ENCODE measurements at regions of chr1 and their contacts with region 1.

Region 1: DNA sequence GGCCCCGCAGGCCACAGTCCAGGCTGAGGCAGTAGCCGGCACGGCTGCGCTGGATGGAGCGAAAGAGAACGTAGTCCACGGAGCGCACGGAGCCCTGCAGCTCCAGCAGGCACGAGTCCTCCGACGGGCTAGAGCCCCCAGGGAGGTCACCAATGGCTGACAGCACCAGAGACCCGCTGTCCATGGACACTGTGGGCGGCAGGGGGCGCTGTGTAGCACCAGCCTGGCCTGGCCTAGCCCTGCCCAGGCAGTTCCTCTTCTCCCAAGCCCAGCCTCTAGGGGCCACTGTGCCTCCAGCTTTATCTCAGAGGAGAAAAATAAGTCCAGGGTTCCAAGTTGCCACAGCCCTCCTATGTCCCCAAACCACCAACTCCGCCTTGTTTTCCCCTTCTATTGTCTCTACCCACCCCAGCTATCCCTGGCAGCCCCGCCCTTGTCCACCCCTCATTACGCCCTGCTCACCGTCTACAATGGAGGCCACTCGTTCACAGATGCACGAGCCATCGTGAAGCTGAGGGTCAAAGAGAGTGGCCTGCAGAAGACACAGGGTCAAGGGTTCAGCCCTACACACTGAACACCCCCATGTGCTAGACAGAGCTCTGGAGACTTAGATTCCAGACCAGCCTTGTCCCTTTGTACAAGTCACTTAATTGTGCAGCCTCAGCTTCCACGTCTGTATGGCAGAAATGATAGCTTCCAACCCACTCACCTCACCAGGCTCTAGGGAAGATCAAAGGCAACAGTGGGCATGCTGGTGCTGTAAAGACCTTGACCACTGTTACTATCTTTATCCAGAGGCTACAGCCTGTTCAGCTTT is 4.4 kb downstream of the ENTREP3 start:
- DNase-seq: peak; percentile 98
- ATAC-seq: peak; percentile 97
- H3K4me3 Mint-ChIP-seq: peak overlapping the region; percentile 65
- H3K27ac Mint-ChIP-seq: peak overlapping the region; percentile 70
- H3K4me1 Mint-ChIP-seq: peaks cover 35% of the 10 kb centered on the region
- H3K27me3 Mint-ChIP-seq: no peaks in the 10 kb centered on the region

Region 2: GRCh38 chr1:155117617-155118016 is 133.2 kb before region 1 on chr1:
- CTCF ChIA-PET with region 1: no interaction called
- DNase-seq: no peak
- ATAC-seq: no peak
- H3K4me3 Mint-ChIP-seq: no peak overlapping the region
- H3K27ac Mint-ChIP-seq: no peak overlapping the region
- H3K4me1 Mint-ChIP-seq: no peaks in the 10 kb centered on the region
- H3K27me3 Mint-ChIP-seq: peaks cover 27% of the 10 kb centered on the region

Region 3: DNA sequence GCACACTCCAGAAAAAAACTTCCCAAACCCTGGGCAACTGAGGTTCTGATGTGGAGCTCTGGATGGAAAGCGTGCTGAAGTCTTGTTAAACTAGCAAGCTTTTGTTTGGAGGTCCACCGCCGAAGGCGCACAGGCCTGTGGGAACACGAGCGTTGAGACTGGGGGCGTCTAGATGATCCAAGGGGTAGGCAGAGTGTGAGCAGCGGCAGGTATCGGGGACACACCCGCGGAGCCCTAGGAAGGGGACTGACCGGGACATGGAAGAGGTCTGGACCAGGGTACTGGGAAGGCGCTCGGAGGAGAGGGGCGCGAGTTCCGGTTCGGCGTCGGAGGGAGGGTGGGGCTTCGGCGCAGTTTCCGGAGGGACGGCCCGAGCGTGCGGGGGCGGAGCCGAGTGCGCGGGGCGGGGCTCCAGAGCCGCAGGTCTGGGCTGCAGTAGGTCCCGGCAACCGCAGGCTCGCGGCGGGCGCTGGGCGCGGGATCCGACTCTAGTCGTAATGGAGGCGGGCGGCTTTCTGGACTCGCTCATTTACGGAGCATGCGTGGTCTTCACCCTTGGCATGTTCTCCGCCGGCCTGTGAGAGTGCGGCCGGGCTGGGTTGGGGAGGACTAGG is 115.3 kb before region 1 on chr1 and contains the start of gene SLC50A1:
- CTCF ChIA-PET with region 1: no interaction called
- DNase-seq: peak; percentile 95
- ATAC-seq: peak; percentile 84
- H3K4me3 Mint-ChIP-seq: peak within 1 kb of the TSS; percentile 97
- H3K27ac Mint-ChIP-seq: peak within 1 kb of the TSS; percentile 98
- H3K4me1 Mint-ChIP-seq: peaks cover 37% of the 10 kb centered on the region
- H3K27me3 Mint-ChIP-seq: peaks cover 2% of the 10 kb centered on the region
- total RNA-seq, gene SLC50A1: 39.8 to 41.2 TPM

Region 4: DNA sequence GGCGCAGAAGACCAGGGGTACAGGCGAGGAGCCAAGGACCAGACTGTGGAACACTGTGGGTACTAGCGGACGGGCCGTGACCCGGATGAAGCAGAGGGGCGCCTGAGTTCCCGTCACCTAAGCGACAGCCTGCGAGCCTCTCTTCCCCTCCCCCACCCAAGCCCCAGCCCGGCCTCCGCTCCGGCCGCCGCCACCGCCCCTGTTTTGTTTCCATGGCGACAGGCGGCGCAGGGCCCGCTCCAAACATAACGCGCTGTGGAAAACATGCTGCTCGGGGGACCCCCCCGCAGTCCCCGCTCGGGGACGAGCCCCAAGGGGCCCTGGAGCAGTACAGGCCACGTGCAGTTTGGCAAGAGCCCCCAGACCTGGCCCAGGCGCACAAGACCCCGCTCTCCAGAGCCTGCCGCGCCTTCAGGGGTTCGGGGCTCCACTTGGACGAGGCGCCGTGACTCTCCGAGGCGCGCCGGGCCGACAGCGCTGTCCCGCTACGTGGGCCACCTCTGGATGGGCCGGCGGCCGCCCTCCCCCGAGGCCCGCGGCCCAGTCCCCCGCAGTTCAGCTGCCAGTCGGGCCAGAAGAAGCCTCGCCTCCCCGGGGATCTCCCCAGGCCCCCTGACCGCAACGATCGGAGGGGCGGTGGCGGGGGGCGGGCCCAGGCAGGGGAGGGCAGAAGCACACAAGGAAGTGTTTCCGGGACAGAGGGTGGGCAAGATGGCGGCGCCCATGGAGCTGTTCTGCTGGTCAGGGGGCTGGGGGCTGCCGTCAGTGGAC is 42.1 kb before region 1 on chr1 and contains the start of gene MTX1:
- CTCF ChIA-PET with region 1: interaction called, 36 read pairs
- DNase-seq: peak; percentile 92
- ATAC-seq: peak; percentile 78
- H3K4me3 Mint-ChIP-seq: peak within 1 kb of the TSS; percentile 83
- H3K27ac Mint-ChIP-seq: peak within 1 kb of the TSS; percentile 88
- H3K4me1 Mint-ChIP-seq: peaks cover 34% of the 10 kb centered on the region
- H3K27me3 Mint-ChIP-seq: no peaks in the 10 kb centered on the region
- total RNA-seq, gene MTX1: 39.0 to 48.6 TPM

Region 5: DNA sequence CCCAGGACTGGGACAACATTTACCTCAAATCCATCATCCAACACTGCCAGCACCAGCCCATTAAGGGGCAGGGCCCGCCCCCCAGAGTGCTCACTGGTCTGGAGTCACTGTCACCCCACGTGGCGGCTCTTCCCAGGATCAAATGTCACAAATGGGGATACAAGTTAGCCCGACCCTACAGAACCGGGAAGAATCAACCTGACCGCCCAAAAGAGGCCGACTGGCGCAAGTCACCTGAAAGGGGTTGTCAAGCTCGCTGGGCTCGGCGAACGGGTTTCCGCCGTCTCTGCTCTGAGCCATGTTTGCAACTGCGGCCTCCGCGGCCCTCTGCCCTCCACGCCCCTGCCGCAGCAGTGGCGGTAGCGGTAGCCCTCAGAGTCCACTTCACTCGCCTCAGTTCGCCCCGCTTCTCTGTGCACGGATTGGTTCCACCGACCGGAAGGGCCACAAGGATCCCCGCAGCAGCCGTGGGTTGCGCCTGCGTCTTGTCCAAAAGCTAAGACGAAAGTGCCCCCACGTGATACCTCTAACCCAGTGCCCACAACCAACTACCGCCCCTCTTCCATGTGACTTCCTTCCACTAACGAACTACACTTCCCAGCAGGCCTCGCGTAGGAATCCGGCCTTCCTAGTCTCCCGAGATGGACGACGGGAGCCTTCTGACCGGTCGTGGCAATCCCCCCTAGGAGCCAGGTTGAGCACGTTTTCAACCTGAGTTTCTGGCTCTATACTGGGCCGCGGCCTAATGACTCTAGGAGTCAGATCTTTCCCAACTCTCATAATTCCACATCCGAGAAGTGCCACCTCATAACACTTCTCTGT is 11.2 kb after region 1 on chr1 and contains the start of gene SCAMP3:
- CTCF ChIA-PET with region 1: interaction called, 97 read pairs
- DNase-seq: peak; percentile 95
- ATAC-seq: peak; percentile 97
- H3K4me3 Mint-ChIP-seq: peak within 1 kb of the TSS; percentile 95
- H3K27ac Mint-ChIP-seq: peak within 1 kb of the TSS; percentile 86
- H3K4me1 Mint-ChIP-seq: peaks cover 39% of the 10 kb centered on the region
- H3K27me3 Mint-ChIP-seq: no peaks in the 10 kb centered on the region
- total RNA-seq, gene SCAMP3: 82.0 to 108 TPM

Region 6: DNA sequence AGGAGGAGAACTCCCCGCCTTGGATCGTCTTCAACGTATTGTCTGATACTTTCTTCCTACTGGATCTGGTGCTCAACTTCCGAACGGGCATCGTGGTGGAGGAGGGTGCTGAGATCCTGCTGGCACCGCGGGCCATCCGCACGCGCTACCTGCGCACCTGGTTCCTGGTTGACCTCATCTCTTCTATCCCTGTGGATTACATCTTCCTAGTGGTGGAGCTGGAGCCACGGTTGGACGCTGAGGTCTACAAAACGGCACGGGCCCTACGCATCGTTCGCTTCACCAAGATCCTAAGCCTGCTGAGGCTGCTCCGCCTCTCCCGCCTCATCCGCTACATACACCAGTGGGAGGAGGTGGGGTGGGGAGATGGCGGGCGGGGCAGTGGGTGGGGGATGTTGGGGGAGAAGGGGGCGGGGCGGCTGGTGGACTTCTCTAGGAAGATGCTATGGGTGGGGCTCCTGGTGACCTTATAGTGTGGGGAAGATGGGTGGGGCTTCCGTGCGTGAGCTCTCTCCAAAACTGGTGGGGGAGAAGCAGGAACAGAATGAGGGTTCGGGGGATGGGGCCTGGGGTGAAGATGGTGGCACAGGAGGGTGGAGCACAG is 31.7 kb after region 1 on chr1:
- CTCF ChIA-PET with region 1: interaction called, 28 read pairs
- DNase-seq: no peak
- ATAC-seq: no peak
- H3K4me3 Mint-ChIP-seq: no peak overlapping the region
- H3K27ac Mint-ChIP-seq: no peak overlapping the region
- H3K4me1 Mint-ChIP-seq: peaks cover 6% of the 10 kb centered on the region
- H3K27me3 Mint-ChIP-seq: no peaks in the 10 kb centered on the region

Region 7: DNA sequence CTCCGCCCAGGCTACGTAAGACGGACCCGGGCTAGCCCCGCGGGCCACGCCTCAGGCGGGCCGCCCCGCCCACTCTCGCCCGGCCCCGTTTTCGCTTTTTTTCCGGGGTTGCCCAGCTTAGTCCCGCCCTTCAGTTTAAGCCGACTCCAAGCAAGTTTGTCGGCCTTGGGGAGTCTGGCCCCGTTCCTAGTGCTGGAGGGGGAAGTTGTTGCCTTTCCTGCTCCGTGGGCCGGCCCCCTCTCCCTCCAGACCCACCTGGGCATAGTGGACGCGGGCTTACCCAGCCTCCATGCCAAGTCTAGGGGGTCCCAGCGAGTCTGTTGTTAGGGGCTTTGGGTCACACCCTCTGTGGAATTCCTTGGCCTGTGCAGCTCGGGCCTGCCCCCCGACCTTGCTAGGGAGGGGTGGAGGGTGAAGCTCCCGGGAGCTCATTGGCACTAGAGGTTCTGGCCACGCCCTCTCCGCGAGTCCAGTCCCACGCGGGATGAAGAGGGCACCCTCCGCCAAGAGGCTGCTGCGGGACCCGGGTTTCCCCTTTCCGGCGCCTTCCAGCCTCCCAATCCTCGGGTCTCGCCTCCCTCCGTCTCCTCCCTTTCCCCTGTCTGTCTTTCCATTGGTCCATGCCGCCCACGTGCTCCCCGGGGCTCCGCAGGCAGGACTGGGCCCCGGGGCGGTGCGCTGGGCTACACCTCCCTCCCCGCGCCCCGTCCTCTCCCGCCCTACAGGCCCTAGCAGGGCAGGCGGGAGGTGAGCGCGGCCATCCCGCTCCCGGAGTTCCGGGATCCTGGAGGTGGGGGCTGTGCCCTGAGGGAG is 73.2 kb after region 1 on chr1:
- CTCF ChIA-PET with region 1: interaction called, 160 read pairs
- DNase-seq: peak; percentile 94
- ATAC-seq: peak; percentile 84
- H3K4me3 Mint-ChIP-seq: peak overlapping the region; percentile 85
- H3K27ac Mint-ChIP-seq: peak overlapping the region; percentile 78
- H3K4me1 Mint-ChIP-seq: peaks cover 48% of the 10 kb centered on the region
- H3K27me3 Mint-ChIP-seq: no peaks in the 10 kb centered on the region

Region 8: DNA sequence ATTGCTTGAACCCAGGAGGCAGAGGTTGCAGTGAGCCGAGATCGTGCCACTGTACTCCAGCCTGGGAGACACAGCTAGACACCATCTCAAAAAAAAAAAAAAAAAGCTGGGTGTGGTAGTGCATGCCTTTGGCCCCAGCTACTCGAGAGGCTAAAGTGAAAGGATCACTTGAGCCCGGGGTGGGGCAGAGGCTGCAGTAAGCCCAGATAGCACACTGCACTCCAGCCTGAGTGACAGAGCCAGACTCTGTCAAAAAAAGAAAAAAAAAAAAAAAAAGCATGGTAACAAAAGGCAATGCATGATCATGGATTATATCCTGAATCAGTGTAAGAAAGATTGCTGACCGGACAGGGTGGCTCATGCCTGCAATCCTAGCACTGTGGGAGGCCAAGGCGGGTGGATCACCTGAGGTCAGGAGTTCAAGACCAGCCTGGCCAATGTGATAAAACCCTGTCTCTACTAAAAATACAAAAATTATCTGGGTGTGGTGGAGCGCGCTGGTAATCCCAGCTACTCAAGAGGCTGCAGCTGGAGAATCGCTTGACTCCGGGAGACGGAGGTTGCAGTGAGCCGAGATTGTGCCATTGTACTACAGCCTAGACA is 146.1 kb after region 1 on chr1:
- CTCF ChIA-PET with region 1: no interaction called
- DNase-seq: no peak
- ATAC-seq: no peak
- H3K4me3 Mint-ChIP-seq: no peak overlapping the region
- H3K27ac Mint-ChIP-seq: no peak overlapping the region
- H3K4me1 Mint-ChIP-seq: no peaks in the 10 kb centered on the region
- H3K27me3 Mint-ChIP-seq: no peaks in the 10 kb centered on the region

Region 9: DNA sequence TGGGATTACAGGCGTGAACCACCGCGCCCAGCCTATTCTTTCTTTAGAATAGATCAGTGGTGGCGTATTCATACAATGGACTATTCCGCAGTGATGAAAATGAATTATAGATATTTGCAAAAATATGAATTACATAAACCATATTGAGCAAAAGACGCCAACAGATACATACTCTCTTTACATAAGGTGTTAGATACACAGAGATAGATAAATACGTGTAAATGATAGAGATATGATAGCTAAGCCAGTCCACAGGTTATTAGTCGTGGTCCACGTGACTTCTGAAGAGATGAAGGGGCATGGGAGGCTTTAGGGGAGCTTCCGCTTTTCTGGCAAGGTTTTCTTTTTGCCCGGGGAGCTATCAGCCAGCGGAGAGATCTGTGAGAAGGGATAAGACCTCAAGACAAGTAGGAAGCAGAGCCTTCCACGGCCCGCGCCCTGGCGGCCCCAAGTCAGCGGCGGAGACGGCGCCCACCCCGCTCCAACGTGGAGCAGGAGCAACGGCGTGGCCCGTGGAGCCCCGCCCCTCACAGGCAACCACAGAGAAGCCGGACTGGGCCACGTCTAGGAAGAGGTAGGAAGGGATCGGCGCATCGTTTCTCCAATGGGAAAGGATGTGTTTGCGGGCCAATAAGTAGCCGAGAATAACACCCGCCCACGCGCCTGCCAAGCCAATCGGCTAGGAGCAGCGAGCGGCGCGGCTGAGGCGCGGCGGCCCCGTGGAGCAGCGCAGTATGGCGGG is 358.8 kb after region 1 on chr1 and contains the start of gene MSTO1:
- CTCF ChIA-PET with region 1: interaction called, 11 read pairs
- DNase-seq: peak; percentile 98
- ATAC-seq: peak; percentile 98
- H3K4me3 Mint-ChIP-seq: peak within 1 kb of the TSS; percentile 90
- H3K27ac Mint-ChIP-seq: peak within 1 kb of the TSS; percentile 82
- H3K4me1 Mint-ChIP-seq: peaks cover 5% of the 10 kb centered on the region
- H3K27me3 Mint-ChIP-seq: peaks cover 4% of the 10 kb centered on the region
- total RNA-seq, gene MSTO1: 60.3 to 62.7 TPM